Transverse colon (tissue), 4 donors: ENCODE measurements at regions of chr10 and their contacts with region 1.

Region 1: GRCh38 chr10:118892255-118892654 is 137.3 kb upstream of the NANOS1 start:
- DNase-seq: no peak
- H3K4me3 ChIP-seq: no peak overlapping the region
- H3K27ac ChIP-seq: no peak overlapping the region
- H3K4me1 ChIP-seq: no peaks in the 10 kb centered on the region
- H3K27me3 ChIP-seq: no peaks in the 10 kb centered on the region
- CTCF ChIP-seq: no peak
- EP300 ChIP-seq: no peak
- POLR2A ChIP-seq: no peak

Region 2: GRCh38 chr10:118800920-118801319 is 91.3 kb before region 1 on chr10:
- in situ Hi-C with region 1: loop called in 1 of 4 experiments (anchors 25 kb)
- intact Hi-C with region 1: no loop called
- DNase-seq: peak; percentile 35
- H3K4me3 ChIP-seq: no peak overlapping the region
- H3K27ac ChIP-seq: no peak overlapping the region
- H3K4me1 ChIP-seq: peaks cover 0 to 3% (median 1%) of the 10 kb centered on the region in 4 donors
- H3K27me3 ChIP-seq: no peaks in the 10 kb centered on the region
- CTCF ChIP-seq: peak; percentile 23 to 56 (median 42)
- EP300 ChIP-seq: no peak
- POLR2A ChIP-seq: no peak

Region 3: GRCh38 chr10:119348516-119349240 is 456.4 kb after region 1 on chr10:
- in situ Hi-C with region 1: no loop called
- intact Hi-C with region 1: no loop called
- DNase-seq: no peak
- H3K4me3 ChIP-seq: no peak overlapping the region
- H3K27ac ChIP-seq: peak overlapping the region; percentile 13 to 61 (median 38)
- H3K4me1 ChIP-seq: peaks cover 3 to 20% (median 15%) of the 10 kb centered on the region in 4 donors
- H3K27me3 ChIP-seq: no peaks in the 10 kb centered on the region
- CTCF ChIP-seq: no peak
- EP300 ChIP-seq: no peak
- POLR2A ChIP-seq: no peak